ENCODE measurements at regions of chr14 and their contacts with region 1.

Region 1: GRCh38 chr14:52741865-52742264 is 11.9 kb downstream of the STYX start:
- DNase-seq: peak in 2 of 10 donors; percentile 38 to 50
- ATAC-seq: peak; percentile 60 to 69
- H3K4me3 Mint-ChIP-seq: peak overlapping the region; percentile 54 to 86 (median 80)
- H3K27ac Mint-ChIP-seq: peak overlapping the region; percentile 93 to 99 (median 96)
- H3K4me1 Mint-ChIP-seq: peaks cover 22 to 82% (median 68%) of the 10 kb centered on the region in 4 donors
- H3K27me3 Mint-ChIP-seq: no peaks in the 10 kb centered on the region

Region 2: GRCh38 chr14:52640137-52640536 is 101.7 kb before region 1 on chr14:
- POLR2A ChIA-PET with region 1: no interaction called
- DNase-seq: no peak
- ATAC-seq: no peak
- H3K4me3 Mint-ChIP-seq: no peak overlapping the region
- H3K27ac Mint-ChIP-seq: peak overlapping the region in 2 of 10 donors; percentile 5 to 15
- H3K4me1 Mint-ChIP-seq: no peaks in the 10 kb centered on the region
- H3K27me3 Mint-ChIP-seq: no peaks in the 10 kb centered on the region

Region 3: GRCh38 chr14:52695481-52696091 is 46.3 kb before region 1 on chr14 and contains the start of gene ERO1A:
- POLR2A ChIA-PET with region 1: interaction called, 12 read pairs
- DNase-seq: peak; percentile 14 to 72 (median 56)
- ATAC-seq: peak; percentile 63 to 74
- H3K4me3 Mint-ChIP-seq: peak within 1 kb of the TSS; percentile 94 to 100 (median 98)
- H3K27ac Mint-ChIP-seq: peak within 1 kb of the TSS; percentile 93 to 99 (median 98)
- H3K4me1 Mint-ChIP-seq: peaks cover 23 to 42% (median 41%) of the 10 kb centered on the region in 4 donors
- H3K27me3 Mint-ChIP-seq: no peaks in the 10 kb centered on the region
- polyA plus RNA-seq, gene ERO1A: 29.6 to 32.0 (median 30.2) TPM

Region 4: GRCh38 chr14:52729925-52730667 is 11.8 kb before region 1 on chr14 and contains the start of gene STYX:
- POLR2A ChIA-PET with region 1: interaction called, 54 read pairs
- DNase-seq: peak; percentile 89 to 98 (median 96)
- ATAC-seq: peak; percentile 92 to 93
- H3K4me3 Mint-ChIP-seq: peak within 1 kb of the TSS; percentile 90 to 97 (median 93)
- H3K27ac Mint-ChIP-seq: peak within 1 kb of the TSS; percentile 86 to 97 (median 93)
- H3K4me1 Mint-ChIP-seq: peaks cover 11 to 51% (median 26%) of the 10 kb centered on the region in 4 donors
- H3K27me3 Mint-ChIP-seq: no peaks in the 10 kb centered on the region
- polyA plus RNA-seq, gene STYX: 22.9 to 30.5 (median 25.6) TPM

Measured in naive thymus-derived CD8-positive, alpha-beta T cell (primary cell).